ENCODE measurements at regions of chr21 and their contacts with region 1.

Region 1: DNA sequence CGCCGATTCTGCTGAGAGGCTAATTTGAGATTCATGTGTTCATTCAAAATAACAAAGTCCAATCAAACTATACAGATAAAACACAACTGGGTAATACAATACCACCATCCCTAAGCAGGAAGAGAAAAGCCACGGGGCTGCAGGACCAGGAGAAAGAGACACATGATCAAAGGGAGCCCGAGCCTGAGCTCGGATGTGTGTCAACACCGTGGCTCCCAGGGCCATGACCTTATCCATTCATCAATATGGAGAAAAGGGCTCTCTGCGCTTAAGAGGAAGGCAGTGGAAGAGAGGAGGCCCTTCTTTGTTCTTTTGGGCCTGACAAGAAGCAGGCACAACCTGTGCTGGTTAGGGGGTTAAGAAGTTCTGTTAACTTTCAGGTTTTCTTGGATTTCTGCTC is 56.7 kb downstream of the HUNK start:
- DNase-seq: no peak
- H3K4me3 ChIP-seq: no peak overlapping the region
- H3K27ac ChIP-seq: no peak overlapping the region
- H3K27me3 ChIP-seq: no peaks in the 10 kb centered on the region
- CTCF ChIP-seq: no peak

Region 2: GRCh38 chr21:31945546-31945945 is 16.0 kb after region 1 on chr21:
- CTCF ChIA-PET with region 1: interaction called, 11 read pairs
- POLR2A ChIA-PET with region 1: no interaction called
- DNase-seq: peak; percentile 63
- H3K4me3 ChIP-seq: no peak overlapping the region
- H3K27ac ChIP-seq: peak overlapping the region; percentile 31
- H3K27me3 ChIP-seq: no peaks in the 10 kb centered on the region
- CTCF ChIP-seq: no peak

Measured in AG04450 (cell line).